ENCODE measurements at regions of chr17 and their contacts with region 1.

Region 1: DNA sequence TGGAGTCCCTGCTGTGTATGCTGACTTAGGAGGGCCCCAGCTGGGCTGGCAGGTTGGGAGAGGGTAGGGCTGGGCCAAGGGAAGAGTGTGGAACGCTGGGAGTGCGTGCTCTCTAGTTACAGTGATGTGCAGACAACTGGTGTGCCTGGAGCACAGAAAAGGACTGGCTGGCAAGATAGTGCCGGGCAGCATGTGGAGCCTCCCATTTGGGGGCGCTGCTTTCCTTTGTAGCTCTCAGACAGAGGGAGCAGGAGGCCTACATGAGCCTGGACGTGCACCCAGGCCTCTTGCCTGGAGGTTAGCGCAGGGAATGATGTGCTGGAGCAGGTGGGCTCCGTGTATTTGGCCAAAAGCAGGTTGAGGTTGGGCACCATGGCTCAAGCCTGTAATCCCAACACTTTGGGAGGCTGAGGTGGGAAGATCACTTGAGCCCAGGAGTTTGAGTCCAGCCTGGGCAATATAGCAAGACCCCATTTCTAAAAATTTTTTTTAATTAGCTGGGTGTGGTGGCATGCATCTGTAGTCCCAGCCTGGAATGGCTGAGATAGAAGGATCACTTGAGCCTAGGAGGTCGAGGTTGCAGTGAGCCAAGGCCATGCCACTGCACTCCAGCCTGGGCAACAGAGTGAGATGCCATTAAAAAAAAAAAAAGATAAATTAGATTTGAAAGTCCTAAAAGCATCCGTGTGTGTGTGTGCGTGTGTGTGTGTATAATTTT is 26.1 kb upstream of the TBX4 start:
- DNase-seq: no peak
- ATAC-seq: no peak
- H3K4me3 ChIP-seq: no peak overlapping the region
- H3K27ac ChIP-seq: no peak overlapping the region
- H3K4me1 ChIP-seq: no peaks in the 10 kb centered on the region
- H3K27me3 ChIP-seq: peaks cover 0 to 73% (median 52%) of the 10 kb centered on the region in 7 donors
- CTCF ChIP-seq: no peak

Region 2: GRCh38 chr17:61201232-61201640 is 224.9 kb before region 1 on chr17:
- intact Hi-C with region 1: no loop called
- DNase-seq: no peak
- ATAC-seq: no peak
- H3K4me3 ChIP-seq: no peak overlapping the region
- H3K27ac ChIP-seq: peak overlapping the region in 6 of 10 donors; percentile 0 to 67 (median 35)
- H3K4me1 ChIP-seq: no peaks in the 10 kb centered on the region
- H3K27me3 ChIP-seq: no peaks in the 10 kb centered on the region
- CTCF ChIP-seq: no peak

Region 3: DNA sequence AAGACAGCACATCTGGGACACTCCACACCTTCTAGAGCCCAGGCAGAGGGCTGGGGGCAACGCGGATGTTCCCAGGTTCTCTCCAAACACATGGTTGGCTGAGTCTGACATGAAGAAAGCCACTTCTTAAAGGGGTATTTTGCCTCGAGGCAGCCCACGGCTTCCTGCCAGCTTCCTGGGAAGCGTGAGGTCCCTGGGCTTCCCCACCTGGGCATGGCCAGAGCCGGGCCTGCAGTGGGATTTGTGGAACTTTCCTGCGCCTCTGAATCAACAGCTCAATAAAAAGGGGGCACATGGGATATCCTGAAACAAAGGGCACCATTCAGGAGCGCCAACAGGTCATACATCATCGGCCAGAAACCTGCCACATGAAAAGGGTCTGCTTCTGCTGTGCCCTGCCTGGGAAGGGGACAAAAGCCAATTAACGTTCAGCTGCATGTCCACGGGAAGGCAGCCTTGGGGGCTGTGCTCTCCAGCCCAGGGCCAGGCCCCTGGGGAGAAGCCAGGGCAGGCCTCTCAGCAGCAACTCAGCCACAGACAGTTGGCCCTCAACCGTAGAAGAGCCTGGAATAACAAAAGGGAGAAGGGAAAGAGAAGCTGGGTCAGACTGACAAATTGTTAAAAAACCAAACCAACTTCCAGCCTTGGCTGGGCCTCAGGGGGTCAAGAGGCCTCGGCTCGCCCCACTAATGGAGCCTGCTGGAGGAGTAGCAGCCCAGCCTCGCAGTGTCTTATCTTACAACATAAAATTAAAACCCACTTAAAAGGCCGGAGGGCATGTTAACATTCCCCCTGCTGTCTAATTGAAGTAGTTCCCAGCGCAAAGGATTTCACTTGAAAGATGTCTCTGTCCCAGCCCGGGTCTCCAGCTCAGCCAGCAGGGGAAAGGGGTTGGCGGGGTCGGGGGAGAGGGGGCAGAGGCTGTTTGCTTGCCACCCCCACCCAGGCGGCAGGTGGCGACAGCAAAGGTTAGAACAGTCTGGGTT is 60.3 kb after region 1 on chr17:
- intact Hi-C with region 1: loop called in 1 of 10 experiments (anchors 10 kb)
- DNase-seq: no peak
- ATAC-seq: no peak
- H3K4me3 ChIP-seq: no peak overlapping the region
- H3K27ac ChIP-seq: no peak overlapping the region
- H3K4me1 ChIP-seq: no peaks in the 10 kb centered on the region
- H3K27me3 ChIP-seq: peaks cover 0 to 19% (median 13%) of the 10 kb centered on the region in 7 donors
- CTCF ChIP-seq: no peak

Region 4: DNA sequence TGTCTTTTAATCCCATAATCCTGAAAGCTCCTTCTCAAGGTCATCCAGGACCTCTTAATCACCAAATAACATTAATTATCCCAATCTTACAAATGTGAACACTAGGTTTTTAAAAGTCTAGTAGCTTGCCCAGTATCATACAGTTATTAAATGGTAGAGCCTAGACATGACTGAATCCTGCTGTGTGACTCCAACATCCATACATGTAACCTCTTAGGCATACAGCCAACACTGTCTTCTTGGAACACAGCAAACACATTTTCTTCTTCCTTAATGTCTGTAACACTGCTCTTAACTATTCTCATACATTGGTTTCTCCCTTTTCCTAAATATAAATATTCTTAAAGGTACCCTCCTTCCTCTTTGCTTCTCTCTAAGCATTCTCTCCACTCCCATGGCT is 423.5 kb after region 1 on chr17:
- intact Hi-C with region 1: loop called in 1 of 10 experiments (anchors 5 kb)
- DNase-seq: no peak
- ATAC-seq: no peak
- H3K4me3 ChIP-seq: no peak overlapping the region
- H3K27ac ChIP-seq: no peak overlapping the region
- H3K4me1 ChIP-seq: no peaks in the 10 kb centered on the region
- H3K27me3 ChIP-seq: no peaks in the 10 kb centered on the region
- CTCF ChIP-seq: no peak

Measured in heart right ventricle (tissue), 16 donors.